ENCODE measurements at regions of chr10 and their contacts with region 1.

Region 1: DNA sequence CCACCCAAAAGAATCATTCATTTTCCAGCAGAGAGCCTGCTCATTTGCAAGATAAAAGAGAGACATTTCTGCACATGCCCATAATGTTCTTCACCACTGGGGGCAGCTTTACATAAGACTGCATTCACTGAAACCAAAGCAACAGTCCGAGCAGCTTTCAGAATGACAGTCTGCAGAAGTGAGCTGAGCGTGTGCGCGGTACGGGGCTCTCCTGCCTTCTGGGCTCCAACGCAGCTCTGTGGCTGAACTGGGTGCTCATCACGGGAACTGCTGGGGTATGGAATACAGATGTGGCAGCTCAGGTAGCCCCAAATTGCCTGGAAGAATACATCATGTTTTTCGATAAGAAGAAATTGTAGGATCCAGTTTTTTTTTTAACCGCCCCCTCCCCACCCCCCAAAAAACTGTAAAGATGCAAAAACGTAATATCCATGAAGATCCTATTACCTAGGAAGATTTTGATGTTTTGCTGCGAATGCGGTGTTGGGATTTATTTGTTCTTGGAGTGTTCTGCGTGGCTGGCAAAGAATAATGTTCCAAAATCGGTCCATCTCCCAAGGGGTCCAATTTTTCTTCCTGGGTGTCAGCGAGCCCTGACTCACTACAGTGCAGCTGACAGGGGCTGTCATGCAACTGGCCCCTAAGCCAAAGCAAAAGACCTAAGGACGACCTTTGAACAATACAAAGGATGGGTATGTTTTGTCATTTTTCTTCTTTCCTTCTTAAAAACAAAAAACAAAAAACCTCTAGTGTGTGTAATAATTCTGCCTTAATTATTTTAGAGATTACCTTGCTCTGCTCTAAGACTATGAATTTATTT is at the start of gene LRRTM3:
- DNase-seq: peak; percentile 9
- H3K4me3 Mint-ChIP-seq: no peak within 1 kb of the TSS
- H3K27ac Mint-ChIP-seq: no peak within 1 kb of the TSS
- H3K4me1 Mint-ChIP-seq: peaks cover 4% of the 10 kb centered on the region
- H3K27me3 Mint-ChIP-seq: peaks cover 39% of the 10 kb centered on the region
- total RNA-seq, gene LRRTM3: not detected in 2 replicates

Region 2: GRCh38 chr10:66180581-66181318 is 745.4 kb before region 1 on chr10:
- intact Hi-C with region 1: loop called (anchors 5 kb)
- DNase-seq: no peak
- H3K4me3 Mint-ChIP-seq: no peak overlapping the region
- H3K27ac Mint-ChIP-seq: no peak overlapping the region
- H3K4me1 Mint-ChIP-seq: no peaks in the 10 kb centered on the region
- H3K27me3 Mint-ChIP-seq: no peaks in the 10 kb centered on the region

Region 3: DNA sequence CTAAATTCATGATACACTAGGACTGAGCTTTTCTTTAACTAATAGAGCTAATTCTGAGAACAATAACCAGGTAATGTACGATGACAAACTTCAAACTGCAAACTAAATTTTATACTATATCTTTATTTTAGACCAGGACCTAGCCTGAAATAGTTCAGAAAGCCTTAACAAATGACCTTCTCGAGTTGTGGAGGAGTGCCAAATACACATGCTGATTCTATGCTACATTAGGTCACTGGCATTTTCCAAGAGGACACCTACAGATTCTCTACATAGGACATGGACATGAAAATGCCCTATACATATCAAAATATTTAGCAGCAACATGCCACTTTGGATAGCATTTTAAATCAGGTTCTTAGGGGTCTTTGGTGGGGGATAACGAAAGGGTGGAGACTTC is 44.3 kb before region 1 on chr10:
- intact Hi-C with region 1: no loop called
- DNase-seq: no peak
- H3K4me3 Mint-ChIP-seq: no peak overlapping the region
- H3K27ac Mint-ChIP-seq: no peak overlapping the region
- H3K4me1 Mint-ChIP-seq: no peaks in the 10 kb centered on the region
- H3K27me3 Mint-ChIP-seq: no peaks in the 10 kb centered on the region

Region 4: DNA sequence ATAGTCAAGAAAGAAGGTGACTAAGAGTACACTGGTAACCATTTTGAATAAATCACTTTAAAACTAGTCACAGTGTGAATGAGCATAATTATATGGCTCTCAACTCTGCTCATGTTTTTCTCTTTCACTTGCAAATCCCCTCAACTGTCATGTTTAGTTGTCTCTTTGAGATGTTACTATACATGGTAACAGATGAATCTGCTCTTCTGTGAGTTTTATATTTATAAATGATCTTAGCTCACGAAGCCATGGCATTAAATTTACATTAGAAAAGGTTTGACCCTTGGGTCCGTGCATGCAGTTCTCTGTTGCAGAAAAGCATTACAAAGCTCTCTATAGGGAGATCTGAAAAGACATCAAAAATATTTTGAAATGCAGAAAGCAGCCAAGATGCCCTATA is 33.2 kb before region 1 on chr10:
- intact Hi-C with region 1: no loop called
- DNase-seq: no peak
- H3K4me3 Mint-ChIP-seq: no peak overlapping the region
- H3K27ac Mint-ChIP-seq: no peak overlapping the region
- H3K4me1 Mint-ChIP-seq: no peaks in the 10 kb centered on the region
- H3K27me3 Mint-ChIP-seq: no peaks in the 10 kb centered on the region

Region 5: GRCh38 chr10:67520924-67521520 is 594.9 kb after region 1 on chr10:
- intact Hi-C with region 1: loop called (anchors 5 kb)
- DNase-seq: no peak
- H3K4me3 Mint-ChIP-seq: no peak overlapping the region
- H3K27ac Mint-ChIP-seq: no peak overlapping the region
- H3K4me1 Mint-ChIP-seq: no peaks in the 10 kb centered on the region
- H3K27me3 Mint-ChIP-seq: peaks cover 8% of the 10 kb centered on the region